ENCODE measurements at regions of chr9 and their contacts with region 1.

Region 1: DNA sequence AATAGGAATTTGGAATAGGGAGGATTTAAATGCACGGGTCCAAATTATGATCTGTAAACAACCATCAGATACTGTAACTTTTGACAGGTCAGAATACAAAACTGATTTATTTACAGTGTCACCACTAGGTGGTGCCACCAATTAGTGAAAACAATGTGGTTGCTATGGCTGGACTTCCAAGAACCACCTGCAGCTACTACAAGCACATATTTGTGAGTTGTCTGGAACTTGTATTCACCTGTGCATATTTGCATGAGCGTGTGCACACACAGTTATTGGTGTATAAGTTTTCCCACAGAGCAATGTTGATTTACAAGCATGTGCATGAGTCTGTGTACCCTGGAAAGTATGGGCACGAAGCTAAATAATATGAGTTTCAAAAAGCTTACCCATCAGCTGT is 3.0 kb upstream of the HRCT1 start:
- DNase-seq: peak; percentile 74 to 79
- ATAC-seq: peak in 1 of 2 experiments; percentile 17; a peak in 1 of 6 replicates
- H3K4me3 ChIP-seq: no peak overlapping the region
- H3K27ac ChIP-seq: peak overlapping the region in 1 of 2 experiments; percentile 25; a peak in 2 of 6 replicates
- H3K4me1 ChIP-seq: peaks cover 38% of the 10 kb centered on the region
- CTCF ChIP-seq: peak; percentile 88
- EP300 ChIP-seq: no peak
- POLR2A ChIP-seq: no peak
- RAD21 ChIP-seq: peak; percentile 85 to 86

Region 2: DNA sequence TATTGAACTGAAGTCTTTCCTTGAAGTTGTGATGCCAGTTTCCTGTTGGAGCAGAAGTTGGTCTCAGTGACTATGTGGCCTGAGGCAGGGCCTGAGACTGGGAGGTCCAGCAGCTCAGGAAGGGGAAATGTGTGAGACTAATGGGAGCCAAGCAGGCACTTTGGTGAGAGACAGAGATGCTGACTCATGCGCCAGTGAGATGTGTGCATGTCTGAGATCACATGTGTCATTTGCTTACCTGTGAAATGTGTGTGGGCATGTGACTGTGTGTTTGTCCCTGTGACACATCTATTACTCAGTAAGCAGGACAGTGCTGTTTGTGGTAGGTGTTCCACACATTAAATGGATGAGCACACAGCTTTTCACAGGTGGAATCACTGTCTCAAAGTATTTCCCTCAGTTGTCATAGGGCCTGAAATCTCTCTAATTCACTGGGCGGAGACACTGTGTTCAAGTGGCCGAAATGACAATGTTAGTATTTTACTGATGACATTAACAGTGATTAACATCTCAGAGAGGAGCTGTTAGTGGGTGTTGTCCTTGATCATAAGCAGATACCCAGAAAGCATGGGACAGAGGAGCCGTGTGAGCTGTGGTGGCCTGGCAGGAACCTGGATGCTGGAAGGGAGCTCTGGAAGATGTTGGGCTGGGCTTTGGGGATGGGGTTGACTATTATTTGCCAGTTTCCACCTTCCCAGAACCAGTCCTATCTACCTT is 104.2 kb before region 1 on chr9:
- CTCF ChIA-PET with region 1: no interaction called
- POLR2A ChIA-PET with region 1: no interaction called
- DNase-seq: peak in 1 of 2 experiments; percentile 54
- ATAC-seq: peak; percentile 46 to 63; a peak in 5 of 6 replicates
- H3K4me3 ChIP-seq: no peak overlapping the region
- H3K27ac ChIP-seq: peak overlapping the region; percentile 8 to 18; a peak in 3 of 6 replicates
- H3K4me1 ChIP-seq: peaks cover 33% of the 10 kb centered on the region
- CTCF ChIP-seq: no peak
- EP300 ChIP-seq: no peak
- POLR2A ChIP-seq: no peak
- RAD21 ChIP-seq: no peak

Region 3: DNA sequence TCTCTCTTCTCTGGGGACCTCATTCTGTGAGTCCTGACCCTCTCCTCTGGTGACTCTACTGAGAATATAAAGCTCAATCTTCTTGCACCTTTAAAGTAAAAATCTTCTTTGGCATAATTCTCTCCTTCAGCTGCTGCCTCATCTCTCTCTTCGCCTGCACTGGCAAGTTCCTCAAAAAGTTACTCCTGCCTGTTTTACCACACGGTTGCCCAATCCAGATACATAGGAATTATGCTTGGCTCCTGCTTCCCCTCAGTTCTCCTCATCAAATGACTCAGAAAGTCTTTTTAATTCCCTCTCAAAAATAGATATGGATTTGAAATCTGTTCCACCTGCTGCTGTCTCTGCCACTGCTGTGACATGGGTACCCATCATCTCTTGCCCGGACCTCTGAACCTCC is 11.4 kb before region 1 on chr9:
- CTCF ChIA-PET with region 1: interaction called, 33 read pairs
- POLR2A ChIA-PET with region 1: no interaction called
- DNase-seq: no peak
- ATAC-seq: no peak
- H3K4me3 ChIP-seq: no peak overlapping the region
- H3K27ac ChIP-seq: no peak overlapping the region
- H3K4me1 ChIP-seq: no peaks in the 10 kb centered on the region
- CTCF ChIP-seq: no peak
- EP300 ChIP-seq: no peak
- POLR2A ChIP-seq: no peak
- RAD21 ChIP-seq: no peak

Region 4: DNA sequence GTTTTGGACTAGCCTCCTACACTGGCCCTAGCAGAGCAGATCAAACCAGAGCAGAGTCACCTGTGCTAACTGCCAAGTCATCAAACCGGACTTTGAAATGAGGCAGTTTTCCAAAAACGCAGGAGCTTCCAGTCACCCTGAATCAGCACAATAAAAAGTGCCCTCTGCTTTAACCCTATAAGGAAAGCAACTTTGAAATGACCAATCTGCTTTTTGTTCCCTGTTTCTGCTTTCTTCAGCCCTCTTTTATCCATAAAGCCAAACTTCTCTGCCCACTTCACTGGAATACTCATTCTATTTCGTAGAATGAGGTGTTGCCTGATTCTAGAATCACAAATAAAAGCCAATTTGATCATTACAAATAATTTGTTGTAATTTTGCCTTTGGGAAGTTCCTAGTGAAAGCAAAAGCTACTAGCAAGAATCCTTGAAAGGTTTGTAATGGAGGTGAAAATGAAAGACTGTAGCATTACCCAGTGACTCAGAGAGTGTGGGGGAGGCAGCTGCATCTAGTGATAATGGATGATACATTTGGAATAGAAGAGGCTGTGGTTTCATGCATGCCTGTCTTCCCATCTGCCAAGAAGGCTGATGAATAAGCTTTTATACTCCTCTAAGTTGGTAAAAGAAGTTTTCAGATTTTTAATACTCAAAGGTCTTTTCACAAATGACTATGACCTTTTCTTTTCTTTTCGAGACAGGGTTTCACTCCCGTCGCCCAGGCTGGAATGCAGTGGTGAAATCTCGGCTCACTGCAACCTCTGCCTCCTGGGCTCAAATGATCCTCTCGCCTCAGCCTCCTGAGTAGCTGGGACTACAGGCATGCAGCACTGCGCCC is 21.1 kb after region 1 on chr9:
- CTCF ChIA-PET with region 1: interaction called, 92 read pairs
- POLR2A ChIA-PET with region 1: interaction called, 4 read pairs
- DNase-seq: peak; percentile 61 to 92
- ATAC-seq: peak; percentile 92 to 93
- H3K4me3 ChIP-seq: no peak overlapping the region
- H3K27ac ChIP-seq: peak overlapping the region; percentile 78 to 90
- H3K4me1 ChIP-seq: peaks cover 24% of the 10 kb centered on the region
- CTCF ChIP-seq: no peak
- EP300 ChIP-seq: peak in 1 of 2 experiments; percentile 32; a peak in 1 of 5 replicates
- POLR2A ChIP-seq: no peak
- RAD21 ChIP-seq: no peak

Region 5: DNA sequence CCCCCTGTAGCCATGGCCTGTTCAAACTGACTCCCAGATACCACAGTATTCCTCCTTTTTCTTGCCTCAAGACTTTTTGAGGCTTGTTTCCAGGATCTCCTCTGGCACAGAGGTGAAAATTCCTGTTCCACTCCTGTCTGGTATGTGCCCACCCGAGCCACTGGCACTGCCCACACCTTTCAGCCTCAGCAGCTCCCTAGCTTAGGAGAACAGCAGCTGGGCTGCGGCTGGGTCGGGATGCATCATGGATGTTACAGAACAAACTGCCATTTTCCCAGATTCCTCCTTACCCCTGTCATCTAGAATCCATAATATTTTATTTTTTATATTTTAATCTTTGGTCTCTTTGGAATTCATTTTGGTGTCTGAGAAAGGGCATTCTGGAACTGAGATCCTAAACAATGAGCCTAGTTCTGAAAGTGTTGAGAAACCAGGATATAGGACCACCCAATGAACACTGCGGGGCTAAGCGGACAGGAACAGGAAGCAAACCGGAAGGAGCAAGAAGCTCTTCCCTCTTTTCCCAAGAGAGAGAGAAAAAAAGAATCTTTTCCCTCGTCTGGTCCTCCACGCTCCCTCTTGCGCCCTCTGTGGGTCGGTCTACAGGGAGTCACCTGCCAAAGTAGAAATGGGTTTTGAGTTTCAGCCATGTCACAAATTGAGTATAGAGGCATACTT is 42.4 kb after region 1 on chr9:
- CTCF ChIA-PET with region 1: interaction called, 243 read pairs
- POLR2A ChIA-PET with region 1: interaction called, 9 read pairs
- DNase-seq: peak; percentile 90 to 94
- ATAC-seq: peak; percentile 84 to 95
- H3K4me3 ChIP-seq: peak overlapping the region; percentile 32
- H3K27ac ChIP-seq: peak overlapping the region; percentile 52 to 78
- H3K4me1 ChIP-seq: peaks cover 4% of the 10 kb centered on the region; the same call in 1 of the 3 replicates
- CTCF ChIP-seq: peak; percentile 80
- EP300 ChIP-seq: no peak
- POLR2A ChIP-seq: no peak
- RAD21 ChIP-seq: peak; percentile 65 to 68

Region 6: GRCh38 chr9:36023260-36024048 is 120.4 kb after region 1 on chr9:
- CTCF ChIA-PET with region 1: interaction called, 24 read pairs
- POLR2A ChIA-PET with region 1: no interaction called
- DNase-seq: peak; percentile 60 to 74
- ATAC-seq: peak; percentile 86 to 97
- H3K4me3 ChIP-seq: no peak overlapping the region
- H3K27ac ChIP-seq: no peak overlapping the region
- H3K4me1 ChIP-seq: no peaks in the 10 kb centered on the region
- CTCF ChIP-seq: peak; percentile 93
- EP300 ChIP-seq: no peak
- POLR2A ChIP-seq: no peak
- RAD21 ChIP-seq: peak; percentile 82 to 86

Measured in A549 (cell line).